ENCODE measurements at regions of chr15 and their contacts with region 1.

Region 1: DNA sequence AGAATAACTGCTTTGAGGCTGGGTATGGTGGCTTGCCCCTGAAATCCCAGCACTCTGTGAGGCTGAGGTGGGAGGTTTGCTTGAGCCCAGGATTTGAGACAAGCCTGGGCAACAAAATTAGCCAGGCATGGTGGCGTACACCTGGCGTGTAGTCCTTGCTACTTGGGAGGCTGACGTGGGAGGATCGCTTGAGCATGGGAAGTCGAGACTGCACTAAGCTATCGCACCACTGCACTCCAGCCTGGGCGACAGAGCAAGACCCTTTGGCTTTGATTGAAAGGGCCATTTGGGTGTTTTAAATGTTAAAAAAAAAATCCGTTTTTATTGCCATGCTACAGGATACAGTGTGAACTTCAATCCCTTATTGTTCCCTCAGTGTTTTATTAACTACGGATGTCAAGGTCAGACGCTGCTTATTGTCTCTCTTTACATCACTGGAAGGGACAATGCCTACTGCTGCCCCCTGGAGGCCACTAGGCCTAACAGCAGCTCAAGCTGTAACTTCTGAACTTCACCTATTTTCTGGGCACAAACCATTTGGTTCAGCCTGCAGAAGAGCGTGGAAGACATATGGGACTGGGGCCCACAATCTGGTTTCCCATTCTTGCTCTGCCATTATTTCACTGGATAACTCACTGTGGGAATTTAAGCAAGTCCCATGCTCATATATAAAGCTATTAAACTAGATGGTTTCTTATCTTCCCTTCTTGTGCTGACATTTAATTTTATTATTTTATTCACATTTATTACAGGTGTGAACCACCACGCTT is 15.3 kb upstream of the IREB2 start:
- DNase-seq: peak; percentile 71
- ATAC-seq: peak; percentile 80
- H3K4me3 ChIP-seq: no peak overlapping the region
- H3K4me3 Mint-ChIP-seq: no peak overlapping the region
- H3K27ac ChIP-seq: no peak overlapping the region
- H3K27ac Mint-ChIP-seq: no peak overlapping the region
- H3K4me1 ChIP-seq: no peaks in the 10 kb centered on the region
- H3K4me1 Mint-ChIP-seq: peaks cover 2% of the 10 kb centered on the region
- H3K27me3 ChIP-seq: peaks cover 0 to 5% (median 0%) of the 10 kb centered on the region in 4 experiments
- H3K27me3 Mint-ChIP-seq: peaks cover 34% of the 10 kb centered on the region
- CTCF ChIP-seq: peak; percentile 96

Region 2: DNA sequence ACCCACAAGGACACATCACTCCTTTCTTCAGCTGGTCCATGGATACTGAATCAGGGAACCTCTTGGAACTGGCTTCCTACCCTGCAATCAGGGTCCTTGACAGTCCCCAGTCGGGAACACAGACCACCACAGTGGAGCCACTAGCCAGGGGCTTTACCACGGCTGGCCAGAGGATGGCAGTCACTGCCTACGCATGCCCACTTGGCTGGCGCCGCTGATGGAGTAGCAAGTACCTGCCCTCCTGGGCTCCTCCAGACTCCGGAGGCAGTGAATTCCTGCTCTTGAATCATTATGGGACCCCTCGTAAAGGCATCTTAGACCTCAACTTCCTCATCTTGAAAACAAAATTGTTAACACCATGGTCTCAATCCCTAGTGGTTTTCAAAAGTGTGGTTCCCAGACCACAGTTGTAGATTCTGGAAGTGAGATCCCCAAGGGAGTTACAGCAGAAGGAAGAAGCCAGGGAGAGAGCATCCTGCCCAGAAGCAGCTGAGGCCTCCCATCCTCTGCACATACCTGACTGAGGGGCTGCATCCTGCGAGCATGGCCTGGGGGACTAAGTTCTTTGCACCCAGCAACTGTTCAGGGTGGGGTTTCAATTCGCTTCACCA is 114.2 kb before region 1 on chr15:
- CTCF ChIA-PET with region 1: interaction called, 8 read pairs
- POLR2A ChIA-PET with region 1: no interaction called
- intact Hi-C with region 1: loop called (anchors 2 kb)
- DNase-seq: peak; percentile 30
- ATAC-seq: no peak
- H3K4me3 ChIP-seq: no peak overlapping the region
- H3K4me3 Mint-ChIP-seq: no peak overlapping the region
- H3K27ac ChIP-seq: no peak overlapping the region
- H3K27ac Mint-ChIP-seq: no peak overlapping the region
- H3K4me1 ChIP-seq: no peaks in the 10 kb centered on the region
- H3K4me1 Mint-ChIP-seq: no peaks in the 10 kb centered on the region
- H3K27me3 ChIP-seq: peaks cover 0 to 16% (median 0%) of the 10 kb centered on the region in 4 experiments
- H3K27me3 Mint-ChIP-seq: peaks cover 20% of the 10 kb centered on the region
- CTCF ChIP-seq: peak; percentile 53

Region 3: GRCh38 chr15:79689030-79689429 is 1266.3 kb after region 1 on chr15:
- CTCF ChIA-PET with region 1: no interaction called
- POLR2A ChIA-PET with region 1: no interaction called
- intact Hi-C with region 1: no loop called
- DNase-seq: no peak
- ATAC-seq: no peak
- H3K4me3 ChIP-seq: no peak overlapping the region
- H3K4me3 Mint-ChIP-seq: no peak overlapping the region
- H3K27ac ChIP-seq: no peak overlapping the region
- H3K27ac Mint-ChIP-seq: no peak overlapping the region
- H3K4me1 ChIP-seq: no peaks in the 10 kb centered on the region
- H3K4me1 Mint-ChIP-seq: no peaks in the 10 kb centered on the region
- H3K27me3 ChIP-seq: no peaks in the 10 kb centered on the region
- H3K27me3 Mint-ChIP-seq: peaks cover 16% of the 10 kb centered on the region
- CTCF ChIP-seq: no peak

Measured in B cell (primary cell).